ENCODE measurements at regions of chr12 and their contacts with region 1.

Region 1: GRCh38 chr12:5661811-5662210 is 229.9 kb downstream of the NTF3 start:
- DNase-seq: no peak

Region 2: GRCh38 chr12:5612556-5613410 is 49.0 kb before region 1 on chr12:
- intact Hi-C with region 1: loop called (anchors 2 kb)
- DNase-seq: peak in 1 of 10 donors; percentile 11

Region 3: GRCh38 chr12:5789469-5789968 is 127.7 kb after region 1 on chr12:
- intact Hi-C with region 1: no loop called
- DNase-seq: no peak

Region 4: DNA sequence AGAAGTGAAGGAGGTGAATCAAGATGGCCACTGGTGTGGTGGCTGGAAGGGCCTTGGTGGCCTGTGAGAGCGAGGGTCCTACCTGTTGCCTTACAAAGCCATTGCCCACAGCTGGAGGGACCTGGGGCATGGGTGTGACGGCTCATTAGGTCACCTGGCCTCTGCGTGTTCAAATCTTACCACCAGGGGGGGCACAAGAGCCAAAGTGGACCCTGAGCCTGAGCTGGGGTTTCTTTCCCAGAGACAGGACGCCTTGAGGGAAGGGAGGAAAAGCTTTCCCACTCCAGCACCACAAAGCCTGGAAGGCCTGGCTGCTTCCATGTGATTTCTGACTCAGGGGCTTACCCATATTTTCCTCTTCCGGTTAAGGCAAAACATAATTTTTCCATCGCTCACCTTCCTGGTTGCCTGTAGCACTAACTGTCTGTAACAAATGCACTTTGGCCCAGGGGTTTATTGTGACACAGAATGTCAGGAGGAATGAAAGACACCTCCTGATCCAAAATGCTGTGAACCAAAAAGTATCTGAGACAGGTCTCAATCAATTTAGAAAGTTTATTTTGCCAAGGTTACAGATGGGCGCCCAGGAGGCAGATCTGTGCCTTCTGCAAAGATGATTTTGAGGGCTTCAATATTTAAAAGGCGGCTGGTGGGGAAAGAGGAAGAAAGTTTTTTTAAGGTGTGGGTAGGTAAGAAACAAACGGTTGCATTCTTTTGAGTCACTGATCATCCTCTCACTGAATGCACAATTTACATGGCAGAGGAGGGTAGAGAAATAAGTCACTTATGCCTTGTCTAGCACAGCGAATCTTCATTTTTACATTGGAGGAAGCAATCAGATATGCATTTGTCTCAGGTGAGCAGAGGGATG is 534.1 kb after region 1 on chr12:
- intact Hi-C with region 1: no loop called
- DNase-seq: peak; percentile 69 to 96 (median 87)

Measured in posterior cingulate gyrus (tissue), 11 donors.